CD4-positive, alpha-beta T cell (primary cell): ENCODE measurements at regions of chr7 and their contacts with region 1.

Region 1: GRCh38 chr7:26151953-26152781 is at the start of gene NFE2L3:
- DNase-seq: peak; percentile 60 to 93 (median 76)
- ATAC-seq: peak; percentile 81
- H3K4me3 ChIP-seq: peak within 1 kb of the TSS; percentile 69
- H3K4me3 Mint-ChIP-seq: peak within 1 kb of the TSS; percentile 96
- H3K27ac ChIP-seq: peak within 1 kb of the TSS; percentile 31 to 63
- H3K27ac Mint-ChIP-seq: peak within 1 kb of the TSS; percentile 80
- H3K4me1 ChIP-seq: peaks cover 54% of the 10 kb centered on the region
- H3K4me1 Mint-ChIP-seq: peaks cover 51% of the 10 kb centered on the region
- H3K27me3 ChIP-seq: no peaks in the 10 kb centered on the region
- H3K27me3 Mint-ChIP-seq: no peaks in the 10 kb centered on the region
- CTCF ChIP-seq: no peak
- total RNA-seq, gene NFE2L3: 0.45 to 0.93 TPM

Region 2: GRCh38 chr7:25951031-25951948 is 200.9 kb before region 1 on chr7:
- CTCF ChIA-PET with region 1: no interaction called
- POLR2A ChIA-PET with region 1: no interaction called
- intact Hi-C with region 1: loop called in 1 of 2 experiments (anchors 5 kb)
- DNase-seq: peak; percentile 77 to 96 (median 88)
- ATAC-seq: peak; percentile 98
- H3K4me3 ChIP-seq: peak overlapping the region; percentile 64
- H3K4me3 Mint-ChIP-seq: peak overlapping the region; percentile 96
- H3K27ac ChIP-seq: no peak overlapping the region
- H3K27ac Mint-ChIP-seq: peak overlapping the region; percentile 69
- H3K4me1 ChIP-seq: peaks cover 19% of the 10 kb centered on the region
- H3K4me1 Mint-ChIP-seq: peaks cover 30% of the 10 kb centered on the region
- H3K27me3 ChIP-seq: no peaks in the 10 kb centered on the region
- H3K27me3 Mint-ChIP-seq: no peaks in the 10 kb centered on the region
- CTCF ChIP-seq: no peak

Region 3: GRCh38 chr7:26100406-26101337 is 51.5 kb before region 1 on chr7:
- CTCF ChIA-PET with region 1: interaction called, 3 read pairs
- POLR2A ChIA-PET with region 1: interaction called, 16 read pairs
- intact Hi-C with region 1: loop called in 1 of 2 experiments (anchors 5 kb)
- DNase-seq: peak in 1 of 14 experiments; percentile 43
- ATAC-seq: no peak
- H3K4me3 ChIP-seq: peak overlapping the region; percentile 35
- H3K4me3 Mint-ChIP-seq: peak overlapping the region; percentile 81
- H3K27ac ChIP-seq: no peak overlapping the region
- H3K27ac Mint-ChIP-seq: peak overlapping the region; percentile 89
- H3K4me1 ChIP-seq: peaks cover 37% of the 10 kb centered on the region
- H3K4me1 Mint-ChIP-seq: peaks cover 61% of the 10 kb centered on the region
- H3K27me3 ChIP-seq: no peaks in the 10 kb centered on the region
- H3K27me3 Mint-ChIP-seq: no peaks in the 10 kb centered on the region
- CTCF ChIP-seq: no peak

Region 4: DNA sequence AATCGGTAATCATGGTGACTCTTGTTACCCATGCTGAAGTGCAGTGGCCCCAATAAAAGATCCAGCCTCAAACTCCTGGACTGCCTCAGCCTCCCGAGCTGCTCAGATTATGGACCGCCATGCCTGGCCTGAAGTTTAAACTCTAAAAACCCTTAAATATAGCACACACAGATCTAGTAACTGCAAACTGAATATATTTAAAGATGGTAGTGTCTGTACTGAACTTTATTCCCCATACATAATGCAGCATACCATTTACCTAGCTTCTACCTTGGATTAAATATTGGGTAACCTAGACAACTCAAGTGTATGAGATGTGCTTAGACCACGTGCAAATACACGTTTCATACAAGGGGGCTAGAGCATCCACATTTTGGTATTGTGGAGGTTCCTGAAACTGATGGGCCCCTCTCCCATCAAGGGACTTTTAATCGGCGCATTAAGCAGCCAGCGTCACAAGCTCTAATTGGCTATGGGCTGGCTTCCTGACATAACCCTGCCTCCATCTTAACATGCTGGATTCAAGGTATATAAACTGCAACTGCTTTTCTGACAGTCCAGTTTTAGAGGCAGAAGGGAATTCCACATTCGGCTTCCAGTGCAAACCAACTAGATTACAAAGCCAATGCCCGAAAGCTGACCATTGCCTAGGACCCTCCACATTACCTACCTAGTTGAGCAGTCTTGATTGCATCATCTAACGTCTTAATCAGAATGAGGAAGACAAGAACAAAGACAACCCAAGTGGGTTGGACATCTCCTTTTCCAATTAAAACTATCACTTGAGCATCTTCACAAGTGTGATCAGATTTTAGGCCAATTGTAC is 35.4 kb after region 1 on chr7:
- CTCF ChIA-PET with region 1: interaction called, 7 read pairs
- POLR2A ChIA-PET with region 1: interaction called, 146 read pairs
- intact Hi-C with region 1: no loop called
- DNase-seq: no peak
- ATAC-seq: peak; percentile 18
- H3K4me3 ChIP-seq: no peak overlapping the region
- H3K4me3 Mint-ChIP-seq: peak overlapping the region; percentile 21
- H3K27ac ChIP-seq: peak overlapping the region in 1 of 2 donors; percentile 0
- H3K27ac Mint-ChIP-seq: peak overlapping the region; percentile 54
- H3K4me1 ChIP-seq: peaks cover 21% of the 10 kb centered on the region
- H3K4me1 Mint-ChIP-seq: peaks cover 90% of the 10 kb centered on the region
- H3K27me3 ChIP-seq: no peaks in the 10 kb centered on the region
- H3K27me3 Mint-ChIP-seq: no peaks in the 10 kb centered on the region
- CTCF ChIP-seq: no peak

Region 5: GRCh38 chr7:28020302-28020940 is 1868.3 kb after region 1 on chr7:
- CTCF ChIA-PET with region 1: no interaction called
- POLR2A ChIA-PET with region 1: no interaction called
- intact Hi-C with region 1: loop called in 1 of 2 experiments (anchors 5 kb)
- DNase-seq: peak in 11 of 14 experiments; percentile 3 to 76 (median 15)
- ATAC-seq: peak; percentile 76
- H3K4me3 ChIP-seq: no peak overlapping the region
- H3K4me3 Mint-ChIP-seq: no peak overlapping the region
- H3K27ac ChIP-seq: no peak overlapping the region
- H3K27ac Mint-ChIP-seq: no peak overlapping the region
- H3K4me1 ChIP-seq: peaks cover 6% of the 10 kb centered on the region
- H3K4me1 Mint-ChIP-seq: peaks cover 9% of the 10 kb centered on the region
- H3K27me3 ChIP-seq: no peaks in the 10 kb centered on the region
- H3K27me3 Mint-ChIP-seq: no peaks in the 10 kb centered on the region
- CTCF ChIP-seq: peak; percentile 88